MCF 10A (cell line): ENCODE measurements at regions of chr2 and their contacts with region 1.

Region 1: DNA sequence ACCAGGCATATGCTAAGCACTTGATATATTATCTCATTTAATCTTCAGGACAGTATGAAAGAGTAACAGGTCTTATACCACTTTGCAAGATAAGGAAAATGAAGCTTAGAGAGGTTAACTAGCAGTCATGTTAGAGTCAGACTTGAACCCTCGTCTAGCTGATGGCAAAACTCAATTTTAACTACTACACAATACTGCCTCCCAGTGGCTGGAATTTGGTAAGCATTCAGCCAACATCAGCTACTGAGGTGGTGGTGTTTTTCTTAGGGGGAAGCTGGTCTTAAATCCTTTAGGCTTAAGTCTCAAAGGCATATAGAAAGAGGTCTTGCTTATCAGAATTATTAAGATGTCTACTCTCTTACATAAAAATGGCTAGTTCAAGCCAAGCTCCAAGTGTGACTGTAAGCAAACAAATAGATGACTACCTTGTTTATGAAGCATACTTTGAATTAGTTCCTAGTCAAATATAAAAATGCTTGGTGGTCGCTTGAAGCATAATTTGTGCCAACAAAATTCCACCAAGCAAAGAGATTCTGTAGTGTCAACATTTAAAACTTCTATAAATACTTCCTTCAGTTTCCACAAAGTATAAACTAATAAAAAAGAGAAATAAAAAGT is 325.4 kb upstream of the FIGN start:
- DNase-seq: peak; percentile 58
- H3K4me3 Mint-ChIP-seq: no peak overlapping the region
- H3K27ac Mint-ChIP-seq: no peak overlapping the region
- H3K4me1 Mint-ChIP-seq: no peaks in the 10 kb centered on the region
- H3K27me3 Mint-ChIP-seq: no peaks in the 10 kb centered on the region
- CTCF ChIP-seq: peak; percentile 80

Region 2: GRCh38 chr2:163345908-163346573 is 715.2 kb before region 1 on chr2:
- CTCF ChIA-PET with region 1: interaction called, 11 read pairs
- POLR2A ChIA-PET with region 1: interaction called, 3 read pairs
- intact Hi-C with region 1: loop called (anchors 1 kb)
- DNase-seq: peak; percentile 75
- H3K4me3 Mint-ChIP-seq: no peak overlapping the region
- H3K27ac Mint-ChIP-seq: no peak overlapping the region
- H3K4me1 Mint-ChIP-seq: peaks cover 17% of the 10 kb centered on the region
- H3K27me3 Mint-ChIP-seq: no peaks in the 10 kb centered on the region
- CTCF ChIP-seq: peak; percentile 48

Region 3: DNA sequence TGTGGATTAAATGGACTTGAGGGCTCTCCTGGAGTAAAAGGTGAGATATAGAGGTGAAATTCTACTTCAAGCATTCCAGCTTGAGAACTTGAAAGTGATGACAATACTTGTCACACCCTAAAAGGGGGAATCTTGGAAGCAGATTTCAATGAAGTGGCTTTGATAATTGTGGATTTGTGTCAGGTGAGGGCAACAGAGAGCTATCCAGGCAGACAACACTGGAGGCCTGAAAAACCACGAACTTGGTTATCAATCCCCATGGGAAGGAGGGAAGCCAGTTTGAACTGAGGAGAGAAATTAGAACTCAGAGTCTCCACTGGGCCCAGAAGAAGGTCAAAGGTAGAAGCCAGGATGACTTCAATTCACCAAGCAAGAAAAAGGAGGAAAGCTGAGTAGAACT is 589.3 kb before region 1 on chr2:
- CTCF ChIA-PET with region 1: interaction called, 54 read pairs
- POLR2A ChIA-PET with region 1: interaction called, 3 read pairs
- intact Hi-C with region 1: loop called (anchors 1 kb)
- DNase-seq: peak; percentile 29
- H3K4me3 Mint-ChIP-seq: no peak overlapping the region
- H3K27ac Mint-ChIP-seq: no peak overlapping the region
- H3K4me1 Mint-ChIP-seq: peaks cover 6% of the 10 kb centered on the region
- H3K27me3 Mint-ChIP-seq: no peaks in the 10 kb centered on the region
- CTCF ChIP-seq: peak; percentile 60

Region 4: DNA sequence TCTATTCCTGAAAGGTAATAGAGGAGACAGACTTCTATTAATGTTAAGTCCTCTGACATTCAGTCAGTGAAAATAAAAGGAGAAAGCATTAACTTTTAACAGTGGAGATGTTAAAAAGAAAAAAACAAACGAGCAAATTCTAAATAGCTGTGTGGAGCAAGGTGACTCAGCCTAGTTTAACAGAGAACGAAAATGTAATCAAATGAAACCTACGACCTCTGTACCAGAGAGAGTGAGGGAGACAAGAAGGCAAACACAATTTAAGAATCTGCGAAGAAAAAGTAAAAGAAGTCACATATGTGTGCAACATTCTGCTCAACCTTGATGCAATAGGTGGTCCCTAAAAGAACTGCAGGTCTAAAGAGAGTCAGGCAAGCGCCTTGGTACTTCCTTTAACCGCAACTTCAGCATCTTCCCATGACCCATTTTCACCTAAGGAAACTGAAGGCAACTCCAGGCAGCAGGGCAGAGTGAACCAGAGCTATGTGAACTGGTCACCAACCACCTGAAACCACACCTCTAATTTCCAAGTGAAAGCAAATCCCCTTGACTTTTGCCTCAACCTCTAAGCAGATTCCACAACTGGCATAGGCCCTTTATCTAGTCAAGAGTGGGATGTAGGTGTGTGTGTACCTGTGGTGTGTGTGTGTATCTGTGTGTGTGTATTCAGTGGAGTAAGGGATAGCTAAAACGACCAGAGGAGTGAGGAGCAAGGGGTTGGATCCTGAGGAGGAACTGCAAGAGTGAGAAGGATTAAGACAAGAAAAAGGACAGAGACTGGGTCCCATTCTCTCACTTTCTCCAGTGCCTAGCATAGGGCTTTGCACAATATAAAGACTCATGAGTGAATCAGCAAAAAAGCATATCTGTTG is 368.4 kb before region 1 on chr2:
- CTCF ChIA-PET with region 1: interaction called, 4 read pairs
- POLR2A ChIA-PET with region 1: no interaction called
- intact Hi-C with region 1: loop called (anchors 1 kb)
- DNase-seq: no peak
- H3K4me3 Mint-ChIP-seq: peak overlapping the region; percentile 10
- H3K27ac Mint-ChIP-seq: peak overlapping the region; percentile 57
- H3K4me1 Mint-ChIP-seq: peaks cover 29% of the 10 kb centered on the region
- H3K27me3 Mint-ChIP-seq: no peaks in the 10 kb centered on the region
- CTCF ChIP-seq: no peak

Region 5: GRCh38 chr2:164006704-164007103 is 54.5 kb before region 1 on chr2:
- CTCF ChIA-PET with region 1: no interaction called
- POLR2A ChIA-PET with region 1: no interaction called
- intact Hi-C with region 1: no loop called
- DNase-seq: no peak
- H3K4me3 Mint-ChIP-seq: no peak overlapping the region
- H3K27ac Mint-ChIP-seq: no peak overlapping the region
- H3K4me1 Mint-ChIP-seq: no peaks in the 10 kb centered on the region
- H3K27me3 Mint-ChIP-seq: no peaks in the 10 kb centered on the region
- CTCF ChIP-seq: no peak

Region 6: DNA sequence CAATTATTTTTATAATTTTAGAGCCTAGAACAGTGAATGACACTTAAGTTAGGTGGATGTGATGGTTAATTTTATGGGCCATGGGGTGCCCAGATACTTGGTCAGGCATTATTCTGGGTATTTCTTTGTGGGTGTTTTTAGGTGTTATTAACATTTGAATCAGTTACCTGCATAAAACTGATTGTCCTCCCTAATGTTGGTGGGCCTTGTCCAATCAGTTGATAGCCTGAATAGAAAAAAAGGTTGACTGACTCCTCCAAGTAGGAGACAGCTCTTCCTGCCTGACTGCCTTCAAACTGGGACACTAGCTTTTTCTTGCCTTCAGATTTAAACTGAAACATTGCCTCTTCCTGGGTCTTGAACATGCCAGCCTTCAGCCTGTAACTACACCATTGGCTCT is 12.5 kb before region 1 on chr2:
- CTCF ChIA-PET with region 1: interaction called, 15 read pairs
- POLR2A ChIA-PET with region 1: no interaction called
- intact Hi-C with region 1: no loop called
- DNase-seq: no peak
- H3K4me3 Mint-ChIP-seq: no peak overlapping the region
- H3K27ac Mint-ChIP-seq: no peak overlapping the region
- H3K4me1 Mint-ChIP-seq: no peaks in the 10 kb centered on the region
- H3K27me3 Mint-ChIP-seq: no peaks in the 10 kb centered on the region
- CTCF ChIP-seq: no peak